Activated CD4-positive, alpha-beta T cell treated with anti-CD3 and anti-CD28 coated beads for 36 hours (primary cell): ENCODE measurements at regions of chr14 and their contacts with region 1.

Region 1: GRCh38 chr14:71103662-71104484 is 196.6 kb downstream of the PCNX1 start:
- DNase-seq: no peak
- ATAC-seq: no peak
- H3K4me3 Mint-ChIP-seq: no peak overlapping the region
- H3K27ac Mint-ChIP-seq: no peak overlapping the region
- H3K4me1 Mint-ChIP-seq: peaks cover 4% of the 10 kb centered on the region
- H3K27me3 Mint-ChIP-seq: no peaks in the 10 kb centered on the region

Region 2: DNA sequence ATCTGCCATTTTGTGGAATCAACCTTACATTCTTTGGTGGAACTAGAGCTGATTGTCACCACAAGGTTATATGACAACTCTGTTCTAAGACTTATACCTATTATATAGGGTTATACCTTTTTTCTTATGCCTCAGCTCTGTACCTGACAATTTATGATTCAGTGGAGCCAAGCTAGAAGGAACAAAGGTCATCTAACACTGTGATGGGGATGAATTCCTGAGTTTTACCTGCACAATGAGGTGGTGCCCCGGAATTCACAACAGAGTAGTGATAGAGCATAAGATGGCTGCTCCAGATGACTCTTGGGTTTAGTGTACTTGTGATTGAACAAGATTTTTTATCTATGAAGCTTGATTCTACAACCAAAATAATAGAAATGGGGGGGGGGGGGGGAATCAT is 10.7 kb after region 1 on chr14:
- CTCF ChIA-PET with region 1: interaction called, 17 read pairs
- POLR2A ChIA-PET with region 1: interaction called, 3 read pairs
- intact Hi-C with region 1: no loop called
- DNase-seq: no peak
- ATAC-seq: no peak
- H3K4me3 Mint-ChIP-seq: no peak overlapping the region
- H3K27ac Mint-ChIP-seq: no peak overlapping the region
- H3K4me1 Mint-ChIP-seq: peaks cover 18% of the 10 kb centered on the region
- H3K27me3 Mint-ChIP-seq: no peaks in the 10 kb centered on the region

Region 3: GRCh38 chr14:71753126-71753830 is 649.4 kb after region 1 on chr14:
- CTCF ChIA-PET with region 1: interaction called, 6 read pairs
- POLR2A ChIA-PET with region 1: no interaction called
- intact Hi-C with region 1: loop called (anchors 1 kb)
- DNase-seq: peak; percentile 84
- ATAC-seq: peak; percentile 51
- H3K4me3 Mint-ChIP-seq: no peak overlapping the region
- H3K27ac Mint-ChIP-seq: no peak overlapping the region
- H3K4me1 Mint-ChIP-seq: peaks cover 3% of the 10 kb centered on the region
- H3K27me3 Mint-ChIP-seq: no peaks in the 10 kb centered on the region

Region 4: DNA sequence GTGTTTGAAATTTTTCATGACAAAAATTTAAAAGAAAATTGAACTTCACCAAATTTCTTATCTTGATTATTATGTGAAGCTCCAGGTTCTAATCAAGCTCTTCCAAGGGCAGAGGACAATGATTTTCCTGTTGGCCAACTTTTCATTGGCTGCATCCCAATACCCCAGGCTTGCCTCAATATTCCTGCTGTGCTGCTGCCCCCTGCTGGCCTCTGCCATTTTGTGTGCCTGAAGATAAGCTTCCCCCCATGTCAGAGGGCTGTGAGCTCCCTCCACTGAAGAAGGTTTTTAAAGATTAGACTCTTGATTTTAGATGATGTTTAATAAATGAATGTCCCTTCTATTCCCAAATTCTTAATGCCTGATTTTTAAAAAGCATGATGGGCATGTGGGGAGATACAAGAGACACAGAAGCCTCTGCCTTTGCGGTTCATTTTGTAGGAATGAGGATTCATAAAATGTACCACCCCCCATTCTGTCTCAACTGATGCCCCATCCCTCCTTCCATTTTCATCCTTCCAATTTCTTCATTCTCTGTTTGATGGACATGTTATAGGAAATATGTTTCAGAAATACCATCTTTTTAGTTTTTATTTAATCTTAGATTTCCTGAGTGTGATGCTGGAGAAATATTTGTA is 751.6 kb after region 1 on chr14:
- CTCF ChIA-PET with region 1: interaction called, 10 read pairs
- POLR2A ChIA-PET with region 1: no interaction called
- intact Hi-C with region 1: loop called in 1 of 2 experiments (anchors 5 kb)
- DNase-seq: peak; percentile 78
- ATAC-seq: peak; percentile 33
- H3K4me3 Mint-ChIP-seq: no peak overlapping the region
- H3K27ac Mint-ChIP-seq: no peak overlapping the region
- H3K4me1 Mint-ChIP-seq: peaks cover 3% of the 10 kb centered on the region
- H3K27me3 Mint-ChIP-seq: peaks cover 34% of the 10 kb centered on the region